HEK293 (cell line): ENCODE measurements at regions of chr6 and their contacts with region 1.

Region 1: DNA sequence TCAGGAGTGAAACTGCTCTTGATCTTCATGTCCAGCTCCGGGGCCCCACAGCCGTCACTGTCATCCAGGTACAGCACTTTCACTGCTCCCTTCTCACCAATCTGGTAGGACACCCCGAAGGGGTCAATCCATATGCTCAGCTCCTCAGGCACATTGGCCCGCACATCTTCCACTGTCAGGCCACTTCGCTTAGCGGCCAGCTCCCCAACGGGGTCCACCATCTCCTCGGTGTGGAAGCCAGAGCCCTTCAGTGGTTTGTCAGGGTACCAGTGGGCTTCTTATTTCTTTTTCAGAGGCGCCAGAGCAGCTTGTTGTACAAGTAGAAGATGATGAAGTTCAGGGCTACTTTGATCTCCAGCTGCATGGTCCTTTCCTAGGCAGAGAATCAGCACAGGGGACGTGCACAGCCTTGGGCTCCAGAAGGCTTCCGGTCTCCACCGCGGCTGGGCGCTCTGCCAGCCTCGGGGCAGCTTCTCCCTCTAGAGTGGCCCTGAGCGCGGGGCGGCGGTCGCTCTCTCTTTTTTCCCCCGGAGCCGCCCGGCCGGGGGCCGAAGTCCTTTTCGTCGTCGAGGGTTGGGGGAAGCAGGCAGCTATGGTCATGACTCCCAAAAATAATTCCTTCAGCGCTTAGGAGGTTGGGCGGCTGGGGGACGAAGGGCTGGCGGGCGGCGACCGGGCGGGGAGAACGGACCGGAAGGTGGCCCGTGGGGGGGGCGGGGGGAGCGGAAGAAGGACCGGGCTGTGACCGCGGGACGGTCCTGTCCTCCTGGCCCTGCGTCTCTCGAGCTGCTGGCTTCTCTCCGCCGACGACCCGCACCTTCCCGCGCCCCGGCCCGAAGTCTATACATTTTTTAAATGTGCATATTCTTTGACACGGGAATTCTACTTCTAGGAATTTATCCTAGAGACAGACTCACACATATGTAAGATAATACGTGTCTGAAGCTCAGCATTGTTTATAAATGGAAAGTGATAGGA is 6.5 kb upstream of the ZSCAN9 start:
- H3K4me3 ChIP-seq: peak overlapping the region; percentile 67
- H3K27ac ChIP-seq: peak overlapping the region; percentile 63; the same call in 1 of the 2 replicates
- H3K4me1 ChIP-seq: no peaks in the 10 kb centered on the region; the same call in 1 of the 2 replicates
- CTCF ChIP-seq: no peak

Region 2: GRCh38 chr6:28161410-28162079 is 57.0 kb before region 1 on chr6:
- CTCF ChIA-PET with region 1: no interaction called
- POLR2A ChIA-PET with region 1: interaction called, 18 read pairs
- H3K4me3 ChIP-seq: peak overlapping the region; percentile 50
- H3K27ac ChIP-seq: peak overlapping the region; percentile 63
- H3K4me1 ChIP-seq: peaks cover 3% of the 10 kb centered on the region; the same call in 1 of the 2 replicates
- CTCF ChIP-seq: no peak; the same call in 1 of the 2 replicates

Region 3: DNA sequence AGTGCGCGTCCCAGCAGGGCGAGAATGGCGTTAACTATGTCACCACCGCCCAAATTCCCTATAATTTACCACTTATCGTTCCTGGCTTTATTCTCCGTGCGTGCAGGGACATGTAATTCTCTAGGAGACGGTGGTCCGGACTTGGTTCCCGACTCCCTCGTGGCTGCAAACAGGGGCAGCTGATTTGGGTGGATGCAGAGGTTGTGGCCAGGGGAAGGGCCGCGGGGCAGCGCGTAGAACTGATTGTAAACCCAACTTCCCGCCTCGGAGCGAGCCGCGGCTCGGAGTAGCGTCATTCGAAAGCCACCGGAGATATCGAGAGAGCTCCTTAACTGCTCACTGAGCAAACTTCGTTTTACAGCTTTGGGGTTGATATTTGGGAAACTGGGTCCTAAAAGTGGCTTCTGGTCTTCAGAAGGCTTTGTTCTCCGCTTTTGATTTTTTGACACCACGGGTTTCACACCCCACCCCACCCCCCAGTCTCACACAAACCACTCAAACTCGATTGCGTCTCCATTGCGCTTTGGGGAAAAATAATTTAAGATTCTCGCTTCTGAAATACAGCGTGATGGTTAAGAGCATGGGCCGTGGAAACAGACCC is 10.9 kb before region 1 on chr6:
- CTCF ChIA-PET with region 1: interaction called, 4 read pairs
- POLR2A ChIA-PET with region 1: interaction called, 10 read pairs
- H3K4me3 ChIP-seq: peak overlapping the region; percentile 41
- H3K27ac ChIP-seq: peak overlapping the region; percentile 22; the same call in 1 of the 2 replicates
- H3K4me1 ChIP-seq: no peaks in the 10 kb centered on the region
- CTCF ChIP-seq: no peak

Region 4: DNA sequence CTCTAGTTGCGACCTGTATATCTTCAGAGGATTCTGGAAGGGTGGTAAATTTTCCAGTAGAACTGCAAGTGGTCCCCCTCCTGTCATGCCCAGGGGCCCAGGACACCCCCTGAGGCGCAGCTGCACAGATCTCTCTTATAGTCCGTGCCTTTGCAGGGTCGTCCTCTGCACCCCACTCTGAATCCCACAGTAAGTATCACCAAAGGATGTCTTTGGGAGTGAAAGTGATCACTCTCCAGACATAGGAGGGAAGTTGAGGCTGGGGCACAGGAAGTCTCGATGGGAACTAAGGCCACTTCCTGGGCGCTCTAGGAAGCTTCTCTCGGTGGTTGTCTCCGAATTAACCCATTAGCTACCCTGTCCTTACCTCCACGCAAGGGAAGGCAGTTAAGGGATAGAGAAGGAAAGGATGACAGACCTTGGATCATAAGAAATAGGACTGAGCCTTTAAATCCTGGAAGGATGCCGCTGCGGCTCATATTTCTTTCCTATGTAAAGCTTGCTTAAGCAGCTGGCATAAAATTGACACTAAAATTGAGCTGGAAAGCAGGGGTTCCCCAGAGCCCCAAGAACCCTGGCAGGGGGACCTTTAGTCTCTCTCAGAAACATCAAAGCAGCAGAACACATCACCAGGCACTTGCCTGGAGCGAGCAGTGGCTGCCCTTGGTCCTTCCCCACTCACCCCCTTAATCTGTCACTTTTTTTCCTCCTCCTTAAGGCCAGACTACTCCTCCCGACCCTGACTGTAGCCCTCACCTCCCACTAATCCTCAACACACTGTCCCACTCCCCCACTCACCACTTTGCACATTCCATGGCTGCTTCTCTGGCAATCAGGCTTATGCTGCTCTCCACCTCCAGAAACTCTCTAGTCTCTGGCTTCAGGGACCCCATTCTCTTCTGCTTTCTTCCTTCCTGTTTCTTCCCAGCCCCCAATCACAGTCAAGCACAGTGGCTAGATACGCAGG is 33.7 kb after region 1 on chr6 and contains the start of gene ZKSCAN4:
- CTCF ChIA-PET with region 1: no interaction called
- POLR2A ChIA-PET with region 1: interaction called, 12 read pairs
- H3K4me3 ChIP-seq: peak within 1 kb of the TSS; percentile 74
- H3K27ac ChIP-seq: peak within 1 kb of the TSS; percentile 20; the same call in 1 of the 2 replicates
- H3K4me1 ChIP-seq: peaks cover 5% of the 10 kb centered on the region; the same call in 1 of the 2 replicates
- CTCF ChIP-seq: no peak